H1 (cell line): ENCODE measurements at regions of chr1 and their contacts with region 1.

Region 1: DNA sequence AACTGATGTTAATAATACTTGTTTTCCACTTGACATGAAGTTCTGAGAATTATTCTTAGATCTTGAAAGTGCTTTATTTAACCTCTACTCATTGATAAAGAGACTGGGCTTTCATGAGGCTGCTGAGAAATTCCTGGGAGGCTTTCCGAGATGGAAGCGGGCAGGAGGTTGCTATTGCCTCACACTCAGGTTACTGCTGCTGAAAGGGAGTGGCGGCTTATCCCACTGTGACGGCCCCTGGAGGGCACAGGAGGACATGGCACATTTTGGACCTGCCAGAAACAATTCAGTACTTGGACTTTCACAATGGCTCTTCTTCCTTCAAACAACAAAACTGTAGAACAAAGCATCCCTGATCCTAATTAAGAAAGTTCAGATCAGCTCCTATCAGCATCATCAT is 16.2 kb upstream of the MARK1 start:
- DNase-seq: no peak
- H3K4me3 ChIP-seq: no peak overlapping the region
- H3K27ac ChIP-seq: no peak overlapping the region
- H3K4me1 ChIP-seq: peaks cover 0 to 3% (median 1%) of the 10 kb centered on the region in 4 experiments; a peak in 3 of 7 replicates
- H3K27me3 ChIP-seq: no peaks in the 10 kb centered on the region
- CTCF ChIP-seq: peak; percentile 36 to 67 (median 63); a peak in 3 of 4 replicates
- EP300 ChIP-seq: no peak
- POLR2A ChIP-seq: no peak
- RAD21 ChIP-seq: peak; percentile 43 to 64

Region 2: GRCh38 chr1:220370031-220370700 is 141.6 kb before region 1 on chr1:
- CTCF ChIA-PET with region 1: interaction called, 11 read pairs
- POLR2A ChIA-PET with region 1: no interaction called
- DNase-seq: no peak
- H3K4me3 ChIP-seq: no peak overlapping the region
- H3K27ac ChIP-seq: no peak overlapping the region
- H3K4me1 ChIP-seq: peaks cover 6 to 14% (median 11%) of the 10 kb centered on the region in 4 experiments; a peak in 6 of 7 replicates
- H3K27me3 ChIP-seq: no peaks in the 10 kb centered on the region
- CTCF ChIP-seq: no peak
- EP300 ChIP-seq: no peak
- POLR2A ChIP-seq: no peak
- RAD21 ChIP-seq: no peak

Region 3: GRCh38 chr1:220521778-220522177 is 10.0 kb after region 1 on chr1:
- CTCF ChIA-PET with region 1: interaction called, 29 read pairs
- POLR2A ChIA-PET with region 1: no interaction called
- DNase-seq: no peak
- H3K4me3 ChIP-seq: no peak overlapping the region
- H3K27ac ChIP-seq: no peak overlapping the region
- H3K4me1 ChIP-seq: peaks cover 0 to 3% (median 0%) of the 10 kb centered on the region in 4 experiments; a peak in 1 of 7 replicates
- H3K27me3 ChIP-seq: no peaks in the 10 kb centered on the region
- CTCF ChIP-seq: no peak
- EP300 ChIP-seq: no peak
- POLR2A ChIP-seq: no peak
- RAD21 ChIP-seq: no peak

Region 4: GRCh38 chr1:220527279-220527907 is 15.6 kb after region 1 on chr1:
- CTCF ChIA-PET with region 1: interaction called, 29 read pairs
- POLR2A ChIA-PET with region 1: no interaction called
- DNase-seq: peak in 1 of 2 experiments; percentile 58
- H3K4me3 ChIP-seq: peak overlapping the region; percentile 80 to 99 (median 90)
- H3K27ac ChIP-seq: no peak overlapping the region
- H3K4me1 ChIP-seq: peaks cover 2 to 8% (median 3%) of the 10 kb centered on the region in 4 experiments; a peak in 5 of 7 replicates
- H3K27me3 ChIP-seq: no peaks in the 10 kb centered on the region
- CTCF ChIP-seq: no peak
- EP300 ChIP-seq: no peak
- POLR2A ChIP-seq: no peak
- RAD21 ChIP-seq: no peak